CD8-positive, alpha-beta T cell (primary cell): ENCODE measurements at regions of chr2 and their contacts with region 1.

Region 1: DNA sequence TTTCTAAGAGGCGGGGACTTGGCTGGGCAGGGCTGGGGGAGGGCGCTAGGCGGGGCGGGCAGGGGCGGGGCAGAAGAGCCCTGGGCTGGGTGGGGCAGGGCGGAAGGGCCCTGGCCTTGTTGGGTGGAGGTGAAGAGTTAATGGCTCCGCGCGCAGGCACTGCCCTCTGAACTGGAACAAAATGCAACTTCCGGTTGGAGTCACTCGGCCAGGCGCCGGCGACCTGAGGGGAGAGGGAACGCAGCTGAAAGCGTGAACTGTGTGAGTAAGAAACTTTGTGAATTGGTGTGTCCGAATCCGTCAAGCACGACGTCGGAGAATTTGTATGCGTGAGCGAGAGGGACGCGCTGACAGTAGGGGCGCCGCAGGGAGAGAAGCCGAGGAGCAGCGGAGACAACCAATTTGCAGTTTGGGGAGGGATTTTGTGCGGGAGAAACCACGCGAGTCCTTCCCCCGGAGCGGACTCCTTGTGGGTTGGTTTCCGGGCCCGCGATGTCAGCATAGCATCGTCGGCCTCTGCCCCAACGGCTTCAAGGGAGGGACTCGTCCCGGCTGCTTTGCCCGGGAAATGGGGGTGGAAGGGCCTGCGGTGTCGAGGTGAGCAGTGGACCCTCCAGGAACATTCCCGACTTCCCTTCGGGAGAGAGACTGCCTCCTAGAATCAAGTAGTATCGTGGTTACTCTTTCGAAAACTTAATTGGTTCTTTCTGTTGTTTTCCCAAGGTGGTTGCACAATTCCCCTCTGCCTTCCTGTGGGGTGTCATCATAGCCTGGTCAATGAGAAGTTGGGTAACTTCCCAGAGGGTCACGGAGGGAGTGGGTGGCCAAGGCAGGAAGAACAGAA is at the start of gene TANK:
- DNase-seq: peak; percentile 77 to 96 (median 87)
- ATAC-seq: peak; percentile 91
- H3K4me3 ChIP-seq: peak within 1 kb of the TSS; percentile 72 to 97
- H3K4me3 Mint-ChIP-seq: peak within 1 kb of the TSS; percentile 96
- H3K27ac ChIP-seq: peak within 1 kb of the TSS; percentile 70 to 96
- H3K27ac Mint-ChIP-seq: peak within 1 kb of the TSS; percentile 93
- H3K4me1 ChIP-seq: peaks cover 21% of the 10 kb centered on the region
- H3K4me1 Mint-ChIP-seq: peaks cover 51% of the 10 kb centered on the region
- H3K27me3 ChIP-seq: no peaks in the 10 kb centered on the region
- H3K27me3 Mint-ChIP-seq: no peaks in the 10 kb centered on the region
- CTCF ChIP-seq: no peak
- total RNA-seq, gene TANK: 63.0 to 79.1 TPM

Region 2: DNA sequence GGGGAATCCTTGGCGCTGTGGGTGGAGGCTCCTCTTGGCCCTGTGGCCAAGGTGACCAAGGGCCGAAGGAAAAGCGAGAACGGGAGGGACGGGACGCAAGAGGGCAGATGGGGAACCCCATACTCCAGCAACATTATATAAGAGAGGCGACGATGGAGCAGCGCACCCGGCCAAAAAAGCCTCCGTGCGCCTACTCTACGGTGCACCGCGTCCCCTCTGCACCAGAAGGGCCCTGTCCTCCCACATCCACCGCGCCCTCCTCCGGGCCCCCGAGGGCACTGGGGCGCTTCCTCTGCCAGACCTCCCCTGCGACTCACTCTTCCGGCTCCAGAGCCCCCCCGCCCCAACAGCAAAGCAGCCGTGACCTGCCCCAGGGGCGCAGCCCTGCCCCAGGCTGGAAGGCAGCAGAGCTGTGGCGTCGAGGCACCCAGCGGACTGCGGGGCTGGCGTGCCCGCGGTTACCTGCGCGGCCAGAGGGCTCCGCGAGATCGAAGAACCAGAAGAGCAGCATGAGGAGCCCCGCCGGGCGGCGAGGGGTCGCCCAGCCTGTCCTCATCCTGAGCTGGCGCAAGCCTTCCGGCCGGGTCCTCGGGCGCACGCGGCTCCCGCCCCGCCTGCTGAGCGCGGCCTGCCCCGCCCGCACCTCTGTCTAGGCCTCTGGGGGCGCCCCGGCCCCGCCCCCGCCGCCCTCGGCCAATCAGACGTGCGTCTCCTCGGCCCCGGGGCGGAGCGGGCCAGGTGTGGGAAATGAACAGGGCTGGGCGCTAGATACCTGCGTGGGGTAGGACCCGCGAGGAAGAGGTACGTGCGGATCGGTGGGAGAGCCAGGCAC is 1256.1 kb before region 1 on chr2:
- CTCF ChIA-PET with region 1: no interaction called
- POLR2A ChIA-PET with region 1: no interaction called
- intact Hi-C with region 1: loop called in 1 of 2 experiments (anchors 1 kb)
- DNase-seq: peak; percentile 68 to 90 (median 81)
- ATAC-seq: peak; percentile 81
- H3K4me3 ChIP-seq: peak within 1 kb of the TSS; percentile 91 to 97
- H3K4me3 Mint-ChIP-seq: peak within 1 kb of the TSS; percentile 98
- H3K27ac ChIP-seq: peak within 1 kb of the TSS; percentile 90 to 94
- H3K27ac Mint-ChIP-seq: peak within 1 kb of the TSS; percentile 98
- H3K4me1 ChIP-seq: peaks cover 12% of the 10 kb centered on the region
- H3K4me1 Mint-ChIP-seq: peaks cover 46% of the 10 kb centered on the region
- H3K27me3 ChIP-seq: no peaks in the 10 kb centered on the region
- H3K27me3 Mint-ChIP-seq: no peaks in the 10 kb centered on the region
- CTCF ChIP-seq: no peak

Region 3: GRCh38 chr2:161077367-161078210 is 82.9 kb before region 1 on chr2:
- CTCF ChIA-PET with region 1: no interaction called
- POLR2A ChIA-PET with region 1: no interaction called
- intact Hi-C with region 1: loop called in 1 of 2 experiments (anchors 5 kb)
- DNase-seq: peak; percentile 11 to 86 (median 53)
- ATAC-seq: peak; percentile 88
- H3K4me3 ChIP-seq: no peak overlapping the region
- H3K4me3 Mint-ChIP-seq: peak overlapping the region; percentile 30
- H3K27ac ChIP-seq: peak overlapping the region; percentile 5 to 43
- H3K27ac Mint-ChIP-seq: peak overlapping the region; percentile 82
- H3K4me1 ChIP-seq: peaks cover 23% of the 10 kb centered on the region
- H3K4me1 Mint-ChIP-seq: peaks cover 28% of the 10 kb centered on the region
- H3K27me3 ChIP-seq: no peaks in the 10 kb centered on the region
- H3K27me3 Mint-ChIP-seq: no peaks in the 10 kb centered on the region
- CTCF ChIP-seq: no peak

Region 4: DNA sequence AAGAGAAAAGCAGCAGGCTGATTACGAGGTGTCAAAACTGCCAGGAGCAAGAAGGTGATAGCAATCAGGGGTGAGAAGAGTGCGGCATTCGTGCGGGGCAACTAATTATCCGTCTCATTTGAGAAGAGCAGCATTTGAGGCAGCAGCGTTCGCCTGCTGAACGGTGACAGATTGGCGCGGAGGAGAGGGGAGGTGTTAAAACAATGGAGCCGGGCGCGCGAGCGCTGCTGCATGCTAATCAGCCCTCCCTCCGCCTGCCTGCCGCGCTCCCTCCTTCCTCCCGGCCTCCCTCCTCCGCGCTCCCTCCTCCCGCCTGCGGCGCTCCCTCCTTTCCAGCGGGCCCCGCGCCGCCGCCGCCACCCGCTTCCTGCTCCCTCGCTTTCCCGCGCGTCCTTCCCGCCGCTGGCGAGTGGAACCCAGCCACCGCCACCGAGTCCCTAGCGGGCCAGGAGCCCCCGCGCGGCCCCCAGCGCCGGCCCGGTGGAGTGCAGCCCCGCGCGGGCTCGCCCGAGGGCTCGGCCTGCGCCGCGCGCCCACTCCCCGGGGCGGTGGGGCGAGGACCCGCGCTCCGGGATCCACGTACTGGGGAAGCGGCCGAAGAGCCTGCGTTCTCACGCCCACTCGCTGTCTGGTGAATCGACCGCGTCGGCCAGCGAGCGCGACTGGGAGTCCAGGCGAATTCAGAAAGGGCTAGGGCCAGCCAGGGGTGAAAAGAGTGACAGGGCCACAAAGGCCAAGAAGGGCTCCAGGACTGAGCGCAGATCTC is 78.3 kb after region 1 on chr2:
- CTCF ChIA-PET with region 1: interaction called, 3 read pairs
- POLR2A ChIA-PET with region 1: no interaction called
- intact Hi-C with region 1: loop called in 1 of 2 experiments (anchors 5 kb)
- DNase-seq: peak; percentile 18 to 74 (median 68)
- ATAC-seq: peak; percentile 71
- H3K4me3 ChIP-seq: peak overlapping the region; percentile 56 to 64
- H3K4me3 Mint-ChIP-seq: peak overlapping the region; percentile 92
- H3K27ac ChIP-seq: no peak overlapping the region
- H3K27ac Mint-ChIP-seq: peak overlapping the region; percentile 78
- H3K4me1 ChIP-seq: peaks cover 16% of the 10 kb centered on the region
- H3K4me1 Mint-ChIP-seq: peaks cover 49% of the 10 kb centered on the region
- H3K27me3 ChIP-seq: peaks cover 0 to 4% of the 10 kb centered on the region in 2 experiments
- H3K27me3 Mint-ChIP-seq: peaks cover 2% of the 10 kb centered on the region
- CTCF ChIP-seq: no peak

Region 5: GRCh38 chr2:161308178-161308955 is 147.9 kb after region 1 on chr2 and contains the start of gene PSMD14:
- CTCF ChIA-PET with region 1: no interaction called
- POLR2A ChIA-PET with region 1: no interaction called
- intact Hi-C with region 1: loop called (anchors 1 to 2 kb)
- DNase-seq: peak; percentile 75 to 93 (median 88)
- ATAC-seq: peak; percentile 89
- H3K4me3 ChIP-seq: peak within 1 kb of the TSS; percentile 79 to 89
- H3K4me3 Mint-ChIP-seq: peak within 1 kb of the TSS; percentile 96
- H3K27ac ChIP-seq: peak within 1 kb of the TSS; percentile 67 to 89
- H3K27ac Mint-ChIP-seq: peak within 1 kb of the TSS; percentile 97
- H3K4me1 ChIP-seq: peaks cover 20% of the 10 kb centered on the region
- H3K4me1 Mint-ChIP-seq: peaks cover 40% of the 10 kb centered on the region
- H3K27me3 ChIP-seq: no peaks in the 10 kb centered on the region
- H3K27me3 Mint-ChIP-seq: no peaks in the 10 kb centered on the region
- CTCF ChIP-seq: no peak
- total RNA-seq, gene PSMD14: 28.3 to 29.8 TPM